ENCODE measurements at regions of chr1 and their contacts with region 1.

Region 1: GRCh38 chr1:223244366-223245103 is 101.5 kb upstream of the TLR5 start:
- DNase-seq: peak; percentile 56
- ATAC-seq: peak; percentile 96
- H3K4me3 Mint-ChIP-seq: no peak overlapping the region
- H3K27ac Mint-ChIP-seq: no peak overlapping the region
- H3K4me1 Mint-ChIP-seq: peaks cover 46% of the 10 kb centered on the region
- H3K27me3 Mint-ChIP-seq: no peaks in the 10 kb centered on the region

Region 2: DNA sequence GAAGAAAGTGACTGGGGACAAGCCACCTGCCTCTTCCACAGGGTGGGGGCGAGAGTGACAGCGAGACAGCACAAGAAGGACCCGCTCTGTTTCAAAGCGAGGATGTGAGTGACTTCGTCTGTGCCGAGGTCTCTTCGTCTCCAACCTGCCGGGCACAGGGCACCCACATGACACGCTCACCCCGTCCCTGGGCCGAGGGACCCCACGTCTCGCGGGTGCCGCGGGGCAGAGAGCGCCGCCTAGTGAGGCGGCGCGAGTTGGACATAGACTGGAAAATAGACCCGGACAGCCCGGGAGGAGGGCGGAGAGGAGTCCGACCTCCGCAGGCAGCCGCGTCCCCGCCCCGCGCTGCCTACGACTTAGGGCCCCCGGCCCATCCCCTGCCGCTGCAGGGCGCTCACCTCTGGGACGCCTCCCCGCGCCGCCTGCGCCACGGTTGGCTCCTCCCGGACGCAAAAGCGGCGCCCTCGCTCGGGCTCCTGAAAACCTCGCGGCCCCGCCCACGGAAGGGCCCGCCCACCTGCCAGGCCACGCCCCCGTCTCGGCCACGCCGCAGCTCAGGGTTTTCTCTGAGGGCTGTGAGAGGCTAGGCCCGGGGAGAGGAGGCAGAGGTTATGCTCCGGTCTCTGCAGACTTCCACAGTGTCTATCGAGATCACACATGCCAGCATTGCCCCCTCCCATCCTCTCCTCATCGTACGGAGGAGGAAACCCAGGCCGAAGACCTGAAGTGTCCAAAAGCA is 101.6 kb before region 1 on chr1 and contains the start of gene TLR5:
- CTCF ChIA-PET with region 1: interaction called, 4 read pairs
- POLR2A ChIA-PET with region 1: no interaction called
- intact Hi-C with region 1: loop called in 1 of 2 experiments (anchors 2 kb)
- DNase-seq: peak; percentile 93
- ATAC-seq: peak; percentile 89
- H3K4me3 Mint-ChIP-seq: peak within 1 kb of the TSS; percentile 69
- H3K27ac Mint-ChIP-seq: peak within 1 kb of the TSS; percentile 79
- H3K4me1 Mint-ChIP-seq: peaks cover 30% of the 10 kb centered on the region
- H3K27me3 Mint-ChIP-seq: peaks cover 2% of the 10 kb centered on the region
- total RNA-seq, gene TLR5: 0.21 to 0.56 TPM

Region 3: GRCh38 chr1:223175032-223175431 is 69.5 kb before region 1 on chr1:
- CTCF ChIA-PET with region 1: no interaction called
- POLR2A ChIA-PET with region 1: no interaction called
- intact Hi-C with region 1: no loop called
- DNase-seq: no peak
- ATAC-seq: no peak
- H3K4me3 Mint-ChIP-seq: no peak overlapping the region
- H3K27ac Mint-ChIP-seq: no peak overlapping the region
- H3K4me1 Mint-ChIP-seq: peaks cover 5% of the 10 kb centered on the region
- H3K27me3 Mint-ChIP-seq: no peaks in the 10 kb centered on the region

Measured in activated CD4-positive, alpha-beta T cell treated with anti-CD3 and anti-CD28 coated beads for 36 hours (primary cell).